Posterior vena cava (tissue), 2 donors: ENCODE measurements at regions of chr6 and their contacts with region 1.

Region 1: GRCh38 chr6:63527658-63528514 is 44.4 kb upstream of the LOC128125822 start:
- DNase-seq: no peak

Region 2: GRCh38 chr6:61886608-61887259 is 1641.2 kb before region 1 on chr6:
- intact Hi-C with region 1: loop called in 1 of 2 experiments (anchors 10 kb)
- DNase-seq: no peak